ENCODE measurements at regions of chr5 and their contacts with region 1.

Region 1: GRCh38 chr5:127696683-127697082 is 6.5 kb upstream of the CCDC192 start:
- DNase-seq: no peak
- ATAC-seq: no peak
- H3K4me3 ChIP-seq: no peak overlapping the region
- H3K27ac ChIP-seq: no peak overlapping the region
- H3K4me1 ChIP-seq: no peaks in the 10 kb centered on the region
- H3K27me3 ChIP-seq: no peaks in the 10 kb centered on the region

Region 2: GRCh38 chr5:127660047-127660733 is 36.5 kb before region 1 on chr5:
- intact Hi-C with region 1: loop called in 1 of 2 experiments (anchors 2 kb)
- DNase-seq: no peak
- ATAC-seq: no peak
- H3K4me3 ChIP-seq: no peak overlapping the region
- H3K27ac ChIP-seq: no peak overlapping the region
- H3K4me1 ChIP-seq: no peaks in the 10 kb centered on the region
- H3K27me3 ChIP-seq: no peaks in the 10 kb centered on the region

Measured in aorta (tissue), 5 donors.